Posterior vena cava (tissue), 2 donors: ENCODE measurements at regions of chr1 and their contacts with region 1.

Region 1: DNA sequence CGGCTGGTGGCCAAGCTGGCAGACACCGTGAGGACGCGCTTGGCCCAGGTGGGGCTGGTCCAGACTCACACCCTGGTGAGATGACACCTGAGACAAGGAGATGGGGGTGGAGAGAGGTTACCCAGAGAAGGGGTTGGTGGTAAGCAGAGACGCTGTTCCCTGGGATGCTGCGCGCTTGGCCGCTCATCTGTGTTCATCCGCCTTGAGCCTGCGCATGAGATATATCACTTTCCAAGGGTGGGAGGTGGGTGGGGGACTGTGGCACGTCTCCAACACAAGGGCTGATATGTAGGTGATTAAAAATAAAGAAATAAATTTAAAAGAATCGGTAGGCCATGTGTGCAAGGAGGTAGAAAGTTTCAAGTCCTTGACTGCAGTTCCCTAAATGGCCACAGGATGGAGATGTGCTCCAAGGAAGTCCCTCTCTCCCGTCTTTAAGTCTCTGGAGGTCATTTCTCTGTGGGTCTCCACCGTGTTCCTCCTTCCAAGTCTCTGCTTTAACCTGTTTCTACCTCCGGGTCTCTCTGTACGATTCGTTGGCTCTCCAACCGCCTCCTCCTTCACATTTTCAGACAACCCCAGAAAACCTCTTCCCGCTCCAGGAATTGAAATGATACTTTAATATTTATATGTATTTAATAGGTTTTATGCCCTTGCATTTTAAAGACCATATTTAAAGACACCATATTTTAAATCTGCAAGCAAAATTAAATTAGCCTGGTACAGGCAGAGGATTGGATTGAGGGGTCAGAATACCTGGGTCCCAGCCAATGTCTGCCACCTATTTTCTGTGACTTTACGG is 4.5 kb downstream of the TTC24 start:
- DNase-seq: no peak

Region 2: DNA sequence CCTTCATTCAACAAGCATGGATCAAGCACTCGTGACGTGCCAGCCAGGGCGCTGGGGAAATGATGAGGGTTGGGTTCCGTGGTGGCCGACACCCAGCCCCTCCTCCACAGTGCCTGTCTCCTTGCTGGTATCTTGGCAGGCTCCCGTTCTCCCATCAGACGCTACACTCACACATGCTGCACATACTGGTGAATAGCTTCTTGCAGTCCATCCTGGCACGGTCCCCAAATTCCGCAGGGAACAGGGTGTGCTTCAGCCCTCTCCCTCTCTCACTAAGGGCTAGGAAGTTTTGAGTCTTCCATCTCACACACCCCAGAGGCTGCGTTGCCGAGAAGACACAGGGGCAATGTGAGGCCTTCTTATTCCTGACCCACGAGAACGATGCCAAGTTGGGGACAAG is 73.3 kb before region 1 on chr1:
- intact Hi-C with region 1: loop called in 1 of 2 experiments (anchors 10 kb)
- DNase-seq: peak; percentile 95

Region 3: GRCh38 chr1:156740679-156741612 is 156.9 kb after region 1 on chr1 and contains the start of gene MRPL24:
- intact Hi-C with region 1: no loop called
- DNase-seq: peak; percentile 99
- total RNA-seq, gene MRPL24: 60.5 to 63.7 TPM

Region 4: DNA sequence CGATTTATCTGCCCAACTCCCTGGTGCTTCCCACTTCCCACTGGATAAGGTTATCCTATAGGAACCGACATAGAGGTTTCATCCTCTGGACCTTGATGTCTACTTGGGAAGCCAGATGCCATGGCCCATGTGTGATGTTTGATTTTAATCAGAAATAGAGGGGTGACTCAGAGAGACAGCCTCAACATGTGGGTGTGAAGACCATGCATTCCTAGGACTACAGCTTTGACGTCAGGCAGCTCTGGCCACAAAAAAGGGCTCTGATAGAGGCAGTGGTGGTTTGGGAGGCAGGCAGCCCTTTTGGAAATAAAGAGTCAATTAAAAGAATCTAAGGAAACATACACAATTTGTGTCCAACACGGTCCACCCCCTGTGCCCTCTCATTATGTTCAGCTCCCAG is 237.8 kb after region 1 on chr1:
- intact Hi-C with region 1: no loop called
- DNase-seq: no peak